Activated CD4-positive, alpha-beta T cell treated with anti-CD3 and anti-CD28 coated beads for 36 hours (primary cell): ENCODE measurements at regions of chr10 and their contacts with region 1.

Region 1: GRCh38 chr10:92848441-92849233 is at the start of gene EXOC6:
- DNase-seq: peak; percentile 92
- ATAC-seq: peak; percentile 78
- H3K4me3 Mint-ChIP-seq: peak within 1 kb of the TSS; percentile 79
- H3K27ac Mint-ChIP-seq: peak within 1 kb of the TSS; percentile 90
- H3K4me1 Mint-ChIP-seq: peaks cover 33% of the 10 kb centered on the region
- H3K27me3 Mint-ChIP-seq: no peaks in the 10 kb centered on the region
- total RNA-seq, gene EXOC6: 9.7 to 12.1 TPM

Region 2: GRCh38 chr10:91944880-91945630 is 903.6 kb before region 1 on chr10:
- CTCF ChIA-PET with region 1: no interaction called
- POLR2A ChIA-PET with region 1: no interaction called
- intact Hi-C with region 1: loop called in 1 of 2 experiments (anchors 10 kb)
- DNase-seq: peak; percentile 36
- ATAC-seq: peak; percentile 98
- H3K4me3 Mint-ChIP-seq: no peak overlapping the region
- H3K27ac Mint-ChIP-seq: peak overlapping the region; percentile 77
- H3K4me1 Mint-ChIP-seq: peaks cover 24% of the 10 kb centered on the region
- H3K27me3 Mint-ChIP-seq: no peaks in the 10 kb centered on the region

Region 3: DNA sequence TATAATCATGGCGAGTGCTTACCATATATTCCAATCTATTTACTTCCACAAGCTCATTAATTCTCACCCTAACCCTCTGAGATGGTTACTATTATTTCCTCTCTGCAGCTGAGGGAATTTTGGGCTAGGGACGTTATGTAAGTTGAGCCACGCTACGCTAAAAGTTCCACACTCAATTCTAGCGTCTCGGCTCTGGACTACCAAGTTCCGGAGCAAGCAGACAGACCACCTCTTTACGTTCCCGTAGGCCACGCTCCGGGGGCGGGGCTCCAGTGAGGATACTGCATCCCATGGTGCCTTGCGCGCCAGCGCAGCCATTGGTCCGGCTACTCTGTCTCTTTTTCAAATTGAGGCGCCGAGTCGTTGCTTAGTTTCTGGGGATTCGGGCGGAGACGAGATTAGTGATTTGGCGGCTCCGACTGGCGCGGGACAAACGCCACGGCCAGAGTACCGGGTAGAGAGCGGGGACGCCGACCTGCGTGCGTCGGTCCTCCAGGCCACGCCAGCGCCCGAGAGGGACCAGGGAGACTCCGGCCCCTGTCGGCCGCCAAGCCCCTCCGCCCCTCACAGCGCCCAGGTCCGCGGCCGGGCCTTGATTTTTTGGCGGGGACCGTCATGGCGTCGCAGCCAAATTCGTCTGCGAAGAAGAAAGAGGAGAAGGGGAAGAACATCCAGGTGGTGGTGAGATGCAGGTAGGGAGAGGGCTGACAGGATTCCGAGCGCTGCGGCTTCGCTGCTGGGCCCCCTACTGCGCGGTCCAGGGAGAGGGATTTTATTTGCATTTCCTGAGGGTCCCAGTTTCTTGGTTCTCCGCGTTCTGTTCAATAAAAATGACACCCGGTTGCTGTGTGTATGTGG is 255.6 kb before region 1 on chr10 and contains the start of gene KIF11:
- CTCF ChIA-PET with region 1: interaction called, 6 read pairs
- POLR2A ChIA-PET with region 1: no interaction called
- intact Hi-C with region 1: loop called (anchors 1 to 10 kb)
- DNase-seq: peak; percentile 99
- ATAC-seq: peak; percentile 84
- H3K4me3 Mint-ChIP-seq: peak within 1 kb of the TSS; percentile 94
- H3K27ac Mint-ChIP-seq: peak within 1 kb of the TSS; percentile 97
- H3K4me1 Mint-ChIP-seq: peaks cover 37% of the 10 kb centered on the region
- H3K27me3 Mint-ChIP-seq: no peaks in the 10 kb centered on the region
- total RNA-seq, gene KIF11: 59.1 to 59.3 TPM

Region 4: GRCh38 chr10:92830478-92831389 is 17.9 kb before region 1 on chr10:
- CTCF ChIA-PET with region 1: interaction called, 84 read pairs
- POLR2A ChIA-PET with region 1: interaction called, 3 read pairs
- intact Hi-C with region 1: loop called in 1 of 2 experiments (anchors 1 kb)
- DNase-seq: peak; percentile 59
- ATAC-seq: peak; percentile 77
- H3K4me3 Mint-ChIP-seq: peak overlapping the region; percentile 68
- H3K27ac Mint-ChIP-seq: peak overlapping the region; percentile 86
- H3K4me1 Mint-ChIP-seq: peaks cover 17% of the 10 kb centered on the region
- H3K27me3 Mint-ChIP-seq: no peaks in the 10 kb centered on the region

Region 5: DNA sequence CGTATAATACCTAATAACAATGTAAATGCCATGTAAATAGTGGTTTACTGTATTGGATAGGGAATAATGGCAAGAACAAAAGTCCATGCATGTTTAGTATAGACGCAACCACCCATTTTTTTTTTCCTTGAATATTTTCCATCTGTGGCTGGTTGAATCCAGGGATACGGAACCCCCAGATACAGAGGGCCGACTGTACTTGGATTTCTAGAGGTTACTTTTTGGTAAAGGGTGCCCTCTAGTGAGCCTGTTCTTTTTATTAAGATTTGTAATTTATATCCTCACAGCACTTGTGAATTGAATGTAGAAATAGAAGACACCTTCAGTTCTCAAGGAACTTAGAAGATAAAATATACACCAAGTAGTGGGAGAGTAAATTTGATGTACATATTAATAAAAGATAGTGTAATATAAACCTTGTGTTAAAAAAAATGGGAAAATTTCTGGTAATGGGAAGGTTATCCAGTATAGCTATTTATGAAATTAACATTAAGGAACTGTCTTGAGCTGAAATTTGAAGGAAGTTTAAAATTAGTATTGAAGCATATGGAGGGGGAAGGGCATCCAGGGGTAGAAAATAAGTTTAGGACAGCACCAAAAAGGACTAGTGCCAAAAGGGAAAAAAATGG is 31.7 kb after region 1 on chr10:
- CTCF ChIA-PET with region 1: interaction called, 24 read pairs
- POLR2A ChIA-PET with region 1: interaction called, 3 read pairs
- intact Hi-C with region 1: loop called (anchors 1 kb)
- DNase-seq: no peak
- ATAC-seq: no peak
- H3K4me3 Mint-ChIP-seq: no peak overlapping the region
- H3K27ac Mint-ChIP-seq: no peak overlapping the region
- H3K4me1 Mint-ChIP-seq: peaks cover 27% of the 10 kb centered on the region
- H3K27me3 Mint-ChIP-seq: no peaks in the 10 kb centered on the region

Region 6: DNA sequence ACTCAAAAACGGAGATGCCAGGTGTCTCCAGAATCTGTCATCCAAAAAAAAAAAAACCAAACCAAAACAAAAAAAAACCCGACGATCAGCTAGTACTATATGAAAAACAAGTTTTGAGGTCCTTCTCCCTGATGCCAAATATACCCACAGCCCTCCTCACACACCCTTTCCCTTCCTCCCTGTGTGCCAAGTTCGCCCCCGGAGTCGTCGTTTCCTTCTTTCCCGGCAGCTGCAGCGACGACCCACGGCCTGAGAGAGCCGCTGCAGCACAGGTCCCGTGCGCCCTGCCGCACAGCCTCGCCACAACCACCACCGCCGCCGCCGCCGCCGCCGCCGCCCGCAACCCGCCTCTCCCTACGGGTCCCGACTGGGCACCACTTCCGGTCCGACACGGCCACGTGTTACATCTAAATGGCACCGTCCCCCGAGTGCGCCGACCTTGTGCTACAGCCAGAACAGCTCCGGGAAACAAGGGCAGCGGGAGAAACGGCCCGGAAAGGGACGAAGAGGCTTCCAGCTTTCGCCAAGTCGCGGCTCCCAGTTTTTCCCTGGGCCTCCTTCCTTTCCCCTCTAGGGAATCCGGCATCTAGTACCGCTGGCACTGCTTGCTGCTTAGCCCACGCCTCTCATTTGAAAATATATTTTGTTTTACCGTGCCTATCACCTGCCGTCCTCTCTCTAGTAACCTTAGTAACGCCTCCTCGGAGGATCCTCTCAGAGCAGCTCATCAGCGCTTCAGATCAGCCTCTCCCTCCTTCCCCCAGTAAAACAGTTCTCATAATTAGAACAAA is 853.8 kb after region 1 on chr10 and contains the start of gene FRA10AC1:
- CTCF ChIA-PET with region 1: no interaction called
- POLR2A ChIA-PET with region 1: interaction called, 3 read pairs
- intact Hi-C with region 1: loop called in 1 of 2 experiments (anchors 10 kb)
- DNase-seq: peak; percentile 93
- ATAC-seq: peak; percentile 84
- H3K4me3 Mint-ChIP-seq: no peak within 1 kb of the TSS
- H3K27ac Mint-ChIP-seq: no peak within 1 kb of the TSS
- H3K4me1 Mint-ChIP-seq: peaks cover 29% of the 10 kb centered on the region
- H3K27me3 Mint-ChIP-seq: no peaks in the 10 kb centered on the region
- total RNA-seq, gene FRA10AC1: 18.9 to 29.4 TPM